Common myeloid progenitor, CD34-positive (primary cell): ENCODE measurements at regions of chr11 and their contacts with region 1.

Region 1: DNA sequence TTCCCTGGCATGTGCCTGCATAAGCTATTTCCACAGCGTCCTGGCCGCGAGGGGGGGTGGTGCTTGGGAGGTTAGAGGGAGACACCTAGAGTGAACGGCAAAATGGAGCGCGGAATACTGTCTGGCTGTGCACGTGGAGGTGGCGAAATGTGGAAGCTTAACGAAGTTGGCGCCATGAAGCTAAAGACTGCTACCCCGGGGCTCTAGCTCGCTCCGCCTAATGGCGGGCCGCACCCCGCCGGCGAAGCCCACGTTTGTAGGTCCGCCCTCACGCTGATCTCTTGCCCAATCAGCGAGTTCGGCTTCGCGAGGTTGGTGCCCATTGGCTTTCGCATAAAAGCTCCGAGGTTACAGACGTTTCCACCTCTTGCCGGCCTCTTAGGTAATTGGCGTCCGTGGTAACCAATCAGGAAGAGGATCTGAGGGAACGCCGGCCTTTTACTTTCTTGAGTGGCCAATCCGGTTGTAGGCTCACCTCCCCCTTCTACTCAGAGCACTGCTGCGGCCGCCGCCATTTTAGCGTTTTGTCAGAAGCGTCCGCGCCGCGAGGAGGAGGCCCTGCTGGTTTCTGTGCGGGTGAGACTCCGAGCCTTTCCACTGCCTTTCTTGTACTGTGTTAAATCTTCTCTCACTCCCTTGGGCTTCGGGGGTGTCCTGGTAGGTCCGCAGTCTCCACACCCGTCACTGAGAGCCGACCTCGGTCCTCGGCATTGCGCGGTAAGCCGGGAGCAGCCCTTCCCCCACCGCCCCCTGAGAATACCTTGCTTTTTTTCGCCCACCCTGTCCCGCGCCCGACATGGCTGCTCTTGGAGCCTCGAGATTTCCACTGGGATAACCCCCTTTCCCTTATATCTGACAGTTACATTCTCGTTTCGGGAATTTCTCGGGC is at the start of gene RBM4:
- DNase-seq: peak; percentile 100
- H3K4me3 ChIP-seq: peak within 1 kb of the TSS; percentile 95 to 99 (median 96)
- H3K27ac ChIP-seq: peak within 1 kb of the TSS; percentile 91 to 98
- H3K4me1 ChIP-seq: peaks cover 27 to 51% (median 41%) of the 10 kb centered on the region in 4 experiments
- H3K27me3 ChIP-seq: no peaks in the 10 kb centered on the region

Region 2: DNA sequence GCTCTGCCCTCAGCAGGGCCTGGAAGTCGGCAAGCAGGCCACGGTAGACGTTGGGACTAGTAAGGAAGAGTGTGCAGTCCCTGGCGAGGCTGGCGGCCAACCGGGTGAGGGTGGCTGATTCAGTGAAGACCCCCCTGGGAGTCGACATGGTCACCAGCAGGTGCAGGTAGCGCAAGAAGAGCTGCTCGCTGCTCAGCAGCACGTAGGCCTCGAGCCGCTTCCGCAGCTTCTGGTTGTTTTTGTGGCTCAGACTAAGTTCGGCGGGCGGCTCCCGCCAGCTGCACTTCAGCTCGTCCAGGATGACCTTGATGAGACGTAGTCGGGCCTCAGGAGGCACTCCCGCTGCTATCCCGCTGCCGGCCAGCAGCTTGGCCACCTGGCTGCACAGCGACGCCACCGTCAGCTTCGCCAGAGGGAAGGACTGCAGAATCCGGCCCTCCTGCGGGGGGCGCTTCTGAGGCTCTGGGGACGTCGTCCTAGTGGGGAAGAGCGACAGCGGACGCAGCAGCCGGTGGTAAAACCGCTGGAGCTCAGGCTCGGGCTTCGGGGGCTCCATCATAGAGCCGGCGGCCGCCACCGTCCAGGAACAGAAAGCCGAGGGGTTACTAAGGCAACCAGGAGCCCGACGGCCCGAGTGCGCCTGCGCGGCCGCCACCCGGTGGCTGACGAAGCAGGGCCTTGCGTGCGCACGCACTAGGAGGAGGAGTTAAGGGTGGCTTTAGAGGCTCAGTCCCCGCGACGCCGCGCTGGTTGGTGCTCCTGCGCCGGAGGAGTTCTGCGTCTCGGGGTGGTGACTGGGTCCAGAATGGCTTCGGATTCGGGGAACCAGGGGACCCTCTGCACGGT is 45.7 kb before region 1 on chr11 and contains the starts of genes CCDC87 and CCS:
- CTCF ChIA-PET with region 1: interaction called, 23 read pairs
- POLR2A ChIA-PET with region 1: interaction called, 6 read pairs
- DNase-seq: peak; percentile 97 to 98 (median 97)
- H3K4me3 ChIP-seq: peak within 1 kb of the TSS; percentile 49 to 96 (median 85)
- H3K27ac ChIP-seq: peak within 1 kb of the TSS; percentile 85 to 88
- H3K4me1 ChIP-seq: peaks cover 8 to 42% (median 35%) of the 10 kb centered on the region in 4 experiments
- H3K27me3 ChIP-seq: no peaks in the 10 kb centered on the region

Region 3: GRCh38 chr11:66604155-66604554 is 34.3 kb before region 1 on chr11:
- CTCF ChIA-PET with region 1: no interaction called
- POLR2A ChIA-PET with region 1: no interaction called
- DNase-seq: peak; percentile 62 to 82 (median 74)
- H3K4me3 ChIP-seq: no peak overlapping the region
- H3K27ac ChIP-seq: no peak overlapping the region
- H3K4me1 ChIP-seq: peaks cover 6 to 11% (median 10%) of the 10 kb centered on the region in 4 experiments
- H3K27me3 ChIP-seq: no peaks in the 10 kb centered on the region

Region 4: GRCh38 chr11:66616379-66617154 is 21.9 kb before region 1 on chr11 and contains the start of gene RBM14:
- CTCF ChIA-PET with region 1: interaction called, 52 read pairs
- POLR2A ChIA-PET with region 1: interaction called, 16 read pairs
- DNase-seq: peak; percentile 98 to 99 (median 99)
- H3K4me3 ChIP-seq: peak within 1 kb of the TSS; percentile 90 to 100 (median 96)
- H3K27ac ChIP-seq: peak within 1 kb of the TSS; percentile 93 to 97
- H3K4me1 ChIP-seq: peaks cover 18 to 33% (median 28%) of the 10 kb centered on the region in 4 experiments
- H3K27me3 ChIP-seq: no peaks in the 10 kb centered on the region

Region 5: GRCh38 chr11:66625041-66625751 is 13.2 kb before region 1 on chr11:
- CTCF ChIA-PET with region 1: interaction called, 52 read pairs
- POLR2A ChIA-PET with region 1: interaction called, 6 read pairs
- DNase-seq: no peak
- H3K4me3 ChIP-seq: no peak overlapping the region
- H3K27ac ChIP-seq: no peak overlapping the region
- H3K4me1 ChIP-seq: peaks cover 0 to 15% (median 8%) of the 10 kb centered on the region in 4 experiments
- H3K27me3 ChIP-seq: no peaks in the 10 kb centered on the region

Region 6: GRCh38 chr11:66677599-66678375 is 39.4 kb after region 1 on chr11 and contains the start of gene RBM4B:
- CTCF ChIA-PET with region 1: interaction called, 4 read pairs
- POLR2A ChIA-PET with region 1: interaction called, 12 read pairs
- DNase-seq: peak; percentile 97 to 99 (median 99)
- H3K4me3 ChIP-seq: peak within 1 kb of the TSS; percentile 64 to 94 (median 83)
- H3K27ac ChIP-seq: peak within 1 kb of the TSS; percentile 94 to 96
- H3K4me1 ChIP-seq: peaks cover 13 to 37% (median 30%) of the 10 kb centered on the region in 4 experiments
- H3K27me3 ChIP-seq: no peaks in the 10 kb centered on the region